WTC11 (cell line): ENCODE measurements at regions of chr13 and their contacts with region 1.

Region 1: GRCh38 chr13:44435142-44435982 is 61.7 kb downstream of the SERP2 start:
- DNase-seq: peak; percentile 97
- ATAC-seq: peak; percentile 66
- H3K4me3 Mint-ChIP-seq: peak overlapping the region; percentile 94
- H3K27ac Mint-ChIP-seq: peak overlapping the region; percentile 99
- H3K4me1 Mint-ChIP-seq: peaks cover 27% of the 10 kb centered on the region
- H3K27me3 Mint-ChIP-seq: no peaks in the 10 kb centered on the region
- CTCF ChIP-seq: no peak

Region 2: GRCh38 chr13:44141725-44142539 is 293.4 kb before region 1 on chr13:
- CTCF ChIA-PET with region 1: interaction called, 3 read pairs
- POLR2A ChIA-PET with region 1: interaction called, 34 read pairs
- DNase-seq: peak; percentile 99
- ATAC-seq: peak; percentile 99
- H3K4me3 Mint-ChIP-seq: peak overlapping the region; percentile 97
- H3K27ac Mint-ChIP-seq: peak overlapping the region; percentile 98
- H3K4me1 Mint-ChIP-seq: peaks cover 33% of the 10 kb centered on the region
- H3K27me3 Mint-ChIP-seq: no peaks in the 10 kb centered on the region; the same call in 1 of the 2 replicates
- CTCF ChIP-seq: no peak

Region 3: GRCh38 chr13:44243198-44243857 is 192.0 kb before region 1 on chr13:
- CTCF ChIA-PET with region 1: interaction called, 18 read pairs
- POLR2A ChIA-PET with region 1: interaction called, 13 read pairs
- DNase-seq: peak; percentile 67
- ATAC-seq: peak; percentile 99
- H3K4me3 Mint-ChIP-seq: no peak overlapping the region
- H3K27ac Mint-ChIP-seq: peak overlapping the region; percentile 5; the same call in 1 of the 2 replicates
- H3K4me1 Mint-ChIP-seq: peaks cover 6% of the 10 kb centered on the region; the same call in 1 of the 2 replicates
- H3K27me3 Mint-ChIP-seq: no peaks in the 10 kb centered on the region
- CTCF ChIP-seq: no peak

Region 4: GRCh38 chr13:44340508-44340907 is 94.9 kb before region 1 on chr13:
- CTCF ChIA-PET with region 1: no interaction called
- POLR2A ChIA-PET with region 1: no interaction called
- DNase-seq: no peak
- ATAC-seq: no peak
- H3K4me3 Mint-ChIP-seq: no peak overlapping the region
- H3K27ac Mint-ChIP-seq: no peak overlapping the region
- H3K4me1 Mint-ChIP-seq: peaks cover 7% of the 10 kb centered on the region
- H3K27me3 Mint-ChIP-seq: no peaks in the 10 kb centered on the region
- CTCF ChIP-seq: no peak

Region 5: GRCh38 chr13:44373601-44374348 is 61.6 kb before region 1 on chr13 and contains the start of gene SERP2:
- CTCF ChIA-PET with region 1: interaction called, 5 read pairs
- POLR2A ChIA-PET with region 1: interaction called, 12 read pairs
- DNase-seq: peak; percentile 77
- ATAC-seq: peak; percentile 94
- H3K4me3 Mint-ChIP-seq: peak within 1 kb of the TSS; percentile 59
- H3K27ac Mint-ChIP-seq: no peak within 1 kb of the TSS
- H3K4me1 Mint-ChIP-seq: peaks cover 16% of the 10 kb centered on the region
- H3K27me3 Mint-ChIP-seq: peaks cover 26% of the 10 kb centered on the region
- CTCF ChIP-seq: no peak
- total RNA-seq, gene SERP2: 0.92 to 1.7 TPM (median 1.2 TPM) in 3 replicates

Region 6: GRCh38 chr13:44403461-44404056 is 31.8 kb before region 1 on chr13:
- CTCF ChIA-PET with region 1: interaction called, 6 read pairs
- POLR2A ChIA-PET with region 1: interaction called, 60 read pairs
- DNase-seq: no peak
- ATAC-seq: peak; percentile 17
- H3K4me3 Mint-ChIP-seq: peak overlapping the region; percentile 43
- H3K27ac Mint-ChIP-seq: peak overlapping the region; percentile 82
- H3K4me1 Mint-ChIP-seq: peaks cover 71% of the 10 kb centered on the region
- H3K27me3 Mint-ChIP-seq: peaks cover 3% of the 10 kb centered on the region; the same call in 1 of the 2 replicates
- CTCF ChIP-seq: no peak

Region 7: DNA sequence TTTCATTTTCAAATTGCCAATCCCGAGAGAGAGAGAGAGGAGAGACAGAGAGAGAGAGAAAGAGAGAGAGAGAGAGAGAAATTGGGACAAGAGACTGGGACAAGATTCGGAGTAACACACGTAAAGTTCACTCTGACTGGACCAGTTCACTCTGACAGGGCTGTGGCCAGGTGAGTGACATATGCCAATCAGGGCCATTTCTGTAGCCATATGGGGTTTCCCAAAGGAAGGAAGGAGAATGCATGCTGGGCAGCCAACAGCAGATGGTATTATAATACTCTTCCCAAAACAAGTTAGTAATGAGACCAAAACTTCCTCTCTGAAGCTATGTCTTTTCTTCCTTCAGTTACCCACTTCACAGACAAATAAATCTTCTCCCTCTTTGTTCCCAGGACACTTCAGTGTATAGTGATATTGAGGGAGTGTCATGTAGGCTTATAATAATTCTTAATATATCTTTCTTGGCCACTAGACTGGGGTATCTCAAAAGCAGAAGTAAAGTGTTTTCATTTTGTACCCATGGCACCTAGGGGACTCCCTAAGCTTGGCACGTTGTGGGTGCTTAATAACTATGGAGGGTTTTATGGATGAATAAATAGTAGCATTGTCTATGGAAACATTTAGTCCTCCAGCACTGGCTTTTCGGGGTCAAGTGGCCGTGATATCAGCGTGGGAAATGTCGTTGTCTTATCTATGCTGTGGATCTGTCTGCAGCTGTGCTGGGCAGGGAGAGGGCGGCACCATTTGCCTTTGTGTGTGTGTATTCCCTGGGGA is 10.1 kb before region 1 on chr13:
- CTCF ChIA-PET with region 1: interaction called, 7 read pairs
- POLR2A ChIA-PET with region 1: interaction called, 15 read pairs
- DNase-seq: no peak
- ATAC-seq: no peak
- H3K4me3 Mint-ChIP-seq: no peak overlapping the region
- H3K27ac Mint-ChIP-seq: no peak overlapping the region
- H3K4me1 Mint-ChIP-seq: peaks cover 19% of the 10 kb centered on the region
- H3K27me3 Mint-ChIP-seq: peaks cover 14% of the 10 kb centered on the region
- CTCF ChIP-seq: no peak

Region 8: DNA sequence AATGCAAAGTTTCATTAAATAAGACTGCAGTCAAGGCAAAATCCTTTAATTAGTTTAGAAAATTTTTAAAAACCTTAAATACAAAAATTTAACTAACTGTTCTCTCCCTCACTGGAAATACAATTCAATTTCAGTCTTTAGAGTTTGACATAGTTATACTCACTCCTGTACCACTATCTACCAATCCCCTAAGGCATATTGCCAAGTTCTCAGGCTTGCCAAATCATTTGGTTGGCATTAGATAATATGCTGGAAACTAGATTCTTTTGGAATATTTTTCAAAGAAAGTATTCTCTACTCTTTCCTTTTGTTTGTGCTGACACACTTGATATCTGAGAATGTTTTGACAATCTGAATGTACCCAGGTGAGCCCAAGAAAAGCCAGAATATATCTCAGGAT is 63.6 kb after region 1 on chr13:
- CTCF ChIA-PET with region 1: no interaction called
- POLR2A ChIA-PET with region 1: no interaction called
- DNase-seq: no peak
- ATAC-seq: no peak
- H3K4me3 Mint-ChIP-seq: no peak overlapping the region
- H3K27ac Mint-ChIP-seq: no peak overlapping the region
- H3K4me1 Mint-ChIP-seq: peaks cover 23% of the 10 kb centered on the region
- H3K27me3 Mint-ChIP-seq: no peaks in the 10 kb centered on the region
- CTCF ChIP-seq: no peak